T-cell (primary cell): ENCODE measurements at regions of chr7 and their contacts with region 1.

Region 1: GRCh38 chr7:134044682-134045081 is 82.5 kb upstream of the LRGUK start:
- DNase-seq: no peak
- ATAC-seq: no peak
- H3K4me3 ChIP-seq: no peak overlapping the region
- H3K4me3 Mint-ChIP-seq: no peak overlapping the region
- H3K27ac ChIP-seq: no peak overlapping the region
- H3K27ac Mint-ChIP-seq: no peak overlapping the region
- H3K4me1 ChIP-seq: no peaks in the 10 kb centered on the region
- H3K4me1 Mint-ChIP-seq: peaks cover 0 to 5% (median 0%) of the 10 kb centered on the region in 3 donors
- H3K27me3 ChIP-seq: no peaks in the 10 kb centered on the region
- H3K27me3 Mint-ChIP-seq: no peaks in the 10 kb centered on the region

Region 2: DNA sequence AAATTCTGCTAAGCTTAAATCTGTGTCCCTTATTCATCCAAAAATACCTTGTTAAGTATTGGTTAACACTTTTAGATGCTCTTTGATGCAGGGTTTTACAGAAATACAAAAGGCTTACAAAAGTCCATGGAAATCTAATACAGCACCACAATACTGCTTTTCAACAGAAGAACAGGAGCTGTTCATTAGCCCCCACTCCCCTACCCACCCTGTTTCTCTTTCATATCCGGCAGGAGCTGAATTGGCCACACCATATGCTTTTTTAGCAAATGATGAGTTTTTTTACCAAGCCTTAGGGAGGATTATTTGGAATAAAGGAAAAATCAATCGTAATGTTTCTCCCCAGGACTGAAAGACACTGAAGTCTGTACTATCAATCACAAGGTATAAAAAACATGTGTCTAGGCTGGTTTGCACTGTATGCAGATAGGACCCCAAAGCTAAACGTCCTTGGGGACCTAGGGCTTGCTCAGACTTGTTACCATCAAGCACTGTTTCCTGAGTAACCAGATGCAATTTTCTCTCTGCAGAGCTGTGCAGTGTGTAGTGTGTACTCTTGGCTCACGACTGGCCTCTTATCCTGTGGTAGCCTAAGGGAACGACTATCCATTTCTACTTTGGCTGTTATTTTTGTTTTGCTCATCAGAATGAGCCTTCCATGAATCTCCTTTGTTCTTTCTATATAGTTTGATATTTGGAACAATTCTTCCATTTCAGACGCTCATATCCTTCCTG is 60.8 kb before region 1 on chr7:
- CTCF ChIA-PET with region 1: no interaction called
- POLR2A ChIA-PET with region 1: no interaction called
- DNase-seq: no peak
- ATAC-seq: no peak
- H3K4me3 ChIP-seq: no peak overlapping the region
- H3K4me3 Mint-ChIP-seq: no peak overlapping the region
- H3K27ac ChIP-seq: no peak overlapping the region
- H3K27ac Mint-ChIP-seq: no peak overlapping the region
- H3K4me1 ChIP-seq: no peaks in the 10 kb centered on the region
- H3K4me1 Mint-ChIP-seq: peaks cover 0 to 5% (median 0%) of the 10 kb centered on the region in 3 donors
- H3K27me3 ChIP-seq: no peaks in the 10 kb centered on the region
- H3K27me3 Mint-ChIP-seq: no peaks in the 10 kb centered on the region

Region 3: DNA sequence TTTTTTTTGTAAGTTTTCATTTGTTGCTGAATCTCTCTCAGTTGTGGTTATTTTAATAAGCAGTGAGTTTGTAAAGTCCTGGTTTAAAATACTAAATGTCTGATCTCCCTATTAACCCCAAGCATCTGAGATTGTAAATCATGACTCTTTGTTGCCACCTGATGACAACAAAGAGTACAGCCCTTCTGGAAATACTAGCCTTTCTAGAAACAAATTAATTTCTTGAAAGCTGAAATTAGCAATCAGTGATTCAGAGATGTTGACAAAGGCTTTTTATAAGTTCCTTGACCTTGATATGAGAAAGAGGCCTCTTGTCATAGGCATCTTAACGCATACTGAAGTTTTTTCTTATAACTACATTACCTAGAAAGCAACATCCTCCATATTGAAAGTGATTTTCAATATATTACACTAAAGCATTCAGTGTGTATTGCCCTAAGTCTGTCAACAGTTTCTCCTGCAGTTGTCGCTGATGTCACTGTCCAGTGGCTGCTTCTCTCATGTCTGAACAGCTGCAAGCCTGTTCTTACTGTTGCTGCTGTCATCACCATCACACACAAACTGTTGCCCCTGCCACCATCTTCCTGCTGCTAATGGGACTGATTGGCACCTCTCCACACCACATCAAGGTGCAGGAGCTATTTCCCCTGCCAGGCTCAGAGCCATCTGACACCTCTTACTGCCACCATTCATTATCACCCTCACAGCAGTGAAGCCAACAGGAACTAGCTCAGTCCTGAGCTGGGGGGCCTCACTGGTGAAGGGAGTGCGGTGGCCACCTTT is 12.7 kb before region 1 on chr7:
- CTCF ChIA-PET with region 1: no interaction called
- POLR2A ChIA-PET with region 1: no interaction called
- DNase-seq: peak in 27 of 35 experiments; percentile 0 to 45 (median 10)
- ATAC-seq: peak in 2 of 4 experiments; percentile 23 to 57
- H3K4me3 ChIP-seq: no peak overlapping the region
- H3K4me3 Mint-ChIP-seq: no peak overlapping the region
- H3K27ac ChIP-seq: no peak overlapping the region
- H3K27ac Mint-ChIP-seq: no peak overlapping the region
- H3K4me1 ChIP-seq: peaks cover 0 to 4% of the 10 kb centered on the region in 2 experiments
- H3K4me1 Mint-ChIP-seq: peaks cover 11 to 25% (median 13%) of the 10 kb centered on the region in 3 donors
- H3K27me3 ChIP-seq: no peaks in the 10 kb centered on the region
- H3K27me3 Mint-ChIP-seq: no peaks in the 10 kb centered on the region

Region 4: DNA sequence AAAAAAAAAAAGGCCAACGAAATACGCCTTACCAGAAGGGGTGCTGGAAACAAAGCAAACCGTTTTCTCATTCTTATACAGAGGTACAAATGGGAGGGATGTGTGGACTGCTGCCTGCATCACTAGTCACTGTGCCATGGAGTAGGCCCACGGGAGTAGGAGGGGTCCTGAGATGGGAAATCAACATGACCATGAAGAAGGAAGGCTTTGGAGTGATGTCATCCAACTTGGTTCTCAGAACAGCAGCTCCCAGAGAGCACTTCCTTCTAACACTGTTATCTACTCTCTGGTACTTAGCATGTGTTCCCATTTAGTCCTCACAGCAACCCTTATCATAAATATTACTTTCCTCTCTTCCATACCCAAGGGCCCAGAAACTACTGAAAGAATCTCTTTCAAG is 22.5 kb after region 1 on chr7:
- CTCF ChIA-PET with region 1: no interaction called
- POLR2A ChIA-PET with region 1: interaction called in 1 of 2 experiments, 12 read pairs
- DNase-seq: no peak
- ATAC-seq: no peak
- H3K4me3 ChIP-seq: no peak overlapping the region
- H3K4me3 Mint-ChIP-seq: no peak overlapping the region
- H3K27ac ChIP-seq: no peak overlapping the region
- H3K27ac Mint-ChIP-seq: no peak overlapping the region
- H3K4me1 ChIP-seq: no peaks in the 10 kb centered on the region
- H3K4me1 Mint-ChIP-seq: no peaks in the 10 kb centered on the region
- H3K27me3 ChIP-seq: no peaks in the 10 kb centered on the region
- H3K27me3 Mint-ChIP-seq: no peaks in the 10 kb centered on the region

Region 5: DNA sequence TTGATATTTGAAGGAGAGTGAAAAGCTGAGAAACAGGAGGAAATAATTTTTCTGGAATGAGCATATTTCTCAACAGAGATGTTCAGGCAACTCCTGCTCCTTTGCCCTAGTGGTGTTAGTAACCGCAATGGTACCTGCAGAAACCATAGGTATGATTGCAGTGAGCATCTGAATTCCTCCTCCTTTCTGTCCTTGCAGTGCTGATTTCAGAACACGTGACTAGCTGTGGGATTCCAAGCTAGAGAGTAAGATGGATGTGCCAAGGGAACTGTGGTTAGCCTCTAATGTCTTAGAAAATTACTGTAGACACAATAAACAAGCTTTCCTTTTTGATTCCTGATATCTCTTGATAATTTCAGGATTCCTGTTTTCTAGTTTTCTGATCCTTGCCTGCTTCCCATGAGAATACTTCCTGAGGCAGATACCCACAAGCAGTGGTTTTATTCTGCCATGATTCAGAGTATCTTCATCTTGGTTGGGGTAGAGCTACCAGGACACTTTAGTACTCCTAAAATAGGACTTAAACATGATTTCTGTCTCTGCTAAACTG is 110.0 kb after region 1 on chr7:
- CTCF ChIA-PET with region 1: no interaction called
- POLR2A ChIA-PET with region 1: no interaction called
- DNase-seq: no peak
- ATAC-seq: no peak
- H3K4me3 ChIP-seq: no peak overlapping the region
- H3K4me3 Mint-ChIP-seq: no peak overlapping the region
- H3K27ac ChIP-seq: no peak overlapping the region
- H3K27ac Mint-ChIP-seq: no peak overlapping the region
- H3K4me1 ChIP-seq: no peaks in the 10 kb centered on the region
- H3K4me1 Mint-ChIP-seq: no peaks in the 10 kb centered on the region
- H3K27me3 ChIP-seq: no peaks in the 10 kb centered on the region
- H3K27me3 Mint-ChIP-seq: peaks cover 0 to 5% of the 10 kb centered on the region in 2 donors